Activated B cell treated with CpG ODN at 0.5 μM for 24 hours (primary cell): ENCODE measurements at regions of chr14 and their contacts with region 1.

Region 1: DNA sequence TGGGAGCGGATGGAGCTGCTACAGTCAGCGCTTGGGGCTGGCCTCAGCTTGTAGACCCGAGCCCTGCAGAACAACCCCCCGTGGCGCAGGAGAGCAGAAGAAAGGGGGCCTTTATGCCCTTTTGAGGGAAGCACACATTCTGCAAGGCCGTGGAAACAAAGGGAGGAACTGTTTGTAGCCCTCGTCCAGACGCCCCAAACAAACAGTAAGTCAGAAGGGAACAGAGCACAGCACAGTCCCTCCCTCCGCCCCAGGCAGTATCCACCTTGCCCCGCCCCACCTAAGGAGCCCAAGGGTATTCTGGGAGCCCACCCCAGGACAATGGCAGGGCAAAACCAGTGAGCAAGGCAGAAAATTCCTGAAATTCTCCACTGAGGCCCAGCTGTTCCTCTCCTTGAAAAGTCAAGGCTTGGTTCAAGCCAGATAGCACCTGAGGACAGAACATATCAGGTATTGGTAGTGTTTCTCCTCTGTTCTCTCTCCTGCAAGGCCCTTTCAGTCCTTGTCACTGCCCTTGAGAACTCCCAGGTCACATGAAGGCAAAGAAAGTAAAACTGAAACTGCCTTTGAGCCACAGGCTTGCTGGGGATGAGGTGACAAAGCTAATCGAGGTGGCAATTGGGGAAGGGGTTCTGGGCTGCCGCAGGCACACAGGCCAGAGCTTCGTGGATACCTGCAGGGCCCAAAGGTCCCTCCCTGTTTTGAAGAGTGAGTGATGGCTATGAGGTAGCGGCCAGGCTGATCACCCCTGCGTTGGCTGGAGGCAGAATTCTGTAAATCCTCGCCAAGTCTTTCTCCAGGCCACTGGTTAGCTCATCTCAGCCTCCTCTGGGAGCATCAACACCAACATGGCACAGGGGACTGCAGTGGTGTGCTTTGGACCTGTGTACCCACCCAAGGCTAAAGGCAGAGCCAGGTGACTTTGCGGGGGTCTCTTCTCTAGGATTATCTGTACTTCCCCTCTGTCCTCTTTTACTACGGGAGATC is 499 bp downstream of the DGLUCY start:
- DNase-seq: peak; percentile 54
- ATAC-seq: peak; percentile 84
- H3K4me3 Mint-ChIP-seq: peak overlapping the region; percentile 98
- H3K27ac Mint-ChIP-seq: peak overlapping the region; percentile 98
- H3K4me1 Mint-ChIP-seq: peaks cover 67% of the 10 kb centered on the region
- H3K27me3 Mint-ChIP-seq: no peaks in the 10 kb centered on the region
- CTCF ChIP-seq: no peak

Region 2: GRCh38 chr14:90894241-90894640 is 220.1 kb before region 1 on chr14:
- CTCF ChIA-PET with region 1: no interaction called
- POLR2A ChIA-PET with region 1: no interaction called
- intact Hi-C with region 1: no loop called
- DNase-seq: no peak
- ATAC-seq: no peak
- H3K4me3 Mint-ChIP-seq: no peak overlapping the region
- H3K27ac Mint-ChIP-seq: no peak overlapping the region
- H3K4me1 Mint-ChIP-seq: no peaks in the 10 kb centered on the region
- H3K27me3 Mint-ChIP-seq: no peaks in the 10 kb centered on the region
- CTCF ChIP-seq: no peak

Region 3: GRCh38 chr14:90999299-90999698 is 115.1 kb before region 1 on chr14:
- CTCF ChIA-PET with region 1: no interaction called
- POLR2A ChIA-PET with region 1: interaction called, 23 read pairs
- intact Hi-C with region 1: no loop called
- DNase-seq: no peak
- ATAC-seq: no peak
- H3K4me3 Mint-ChIP-seq: no peak overlapping the region
- H3K27ac Mint-ChIP-seq: peak overlapping the region; percentile 16
- H3K4me1 Mint-ChIP-seq: peaks cover 32% of the 10 kb centered on the region
- H3K27me3 Mint-ChIP-seq: no peaks in the 10 kb centered on the region
- CTCF ChIP-seq: no peak

Region 4: DNA sequence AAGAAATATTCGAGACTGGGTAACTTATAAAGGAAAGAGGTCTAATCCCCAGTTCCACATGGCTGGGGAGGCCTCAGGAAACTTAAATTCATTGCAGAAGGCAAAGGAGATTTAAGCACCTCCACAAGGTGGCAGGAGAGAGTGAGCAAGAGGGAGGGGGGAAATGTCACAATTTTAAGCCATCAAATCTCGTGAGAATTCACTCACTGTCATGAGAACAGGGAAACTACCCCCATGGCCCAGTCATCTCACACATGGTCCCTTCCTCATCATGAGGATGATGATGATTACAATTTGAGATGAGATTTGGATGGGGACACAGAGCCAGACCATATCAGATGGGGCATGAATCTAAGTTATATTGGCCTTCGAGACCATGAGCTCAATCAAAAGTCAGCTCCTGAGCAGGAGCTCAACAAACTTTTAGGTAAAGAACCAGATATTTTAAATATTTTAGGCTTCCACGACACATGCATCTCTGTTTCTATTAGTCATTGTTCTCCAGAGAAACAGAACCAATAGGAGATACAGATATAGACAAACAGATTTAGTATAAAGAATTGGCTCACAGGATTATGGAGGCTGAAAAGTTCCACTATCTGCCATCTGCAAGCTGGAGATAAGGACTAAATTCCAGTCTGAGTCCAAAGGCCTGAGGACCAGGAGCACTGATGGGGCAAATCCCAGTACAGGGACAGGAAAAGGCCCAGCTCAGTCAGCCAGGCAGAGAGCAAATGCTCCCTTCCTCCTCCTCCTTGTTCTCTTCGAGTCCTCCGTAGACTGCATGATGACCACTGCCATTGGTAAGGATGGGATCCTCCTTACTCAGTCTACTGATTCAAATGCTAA is 24.4 kb after region 1 on chr14:
- CTCF ChIA-PET with region 1: interaction called, 5 read pairs
- POLR2A ChIA-PET with region 1: interaction called, 20 read pairs
- intact Hi-C with region 1: loop called (anchors 1 kb)
- DNase-seq: no peak
- ATAC-seq: peak; percentile 29
- H3K4me3 Mint-ChIP-seq: no peak overlapping the region
- H3K27ac Mint-ChIP-seq: peak overlapping the region; percentile 69
- H3K4me1 Mint-ChIP-seq: peaks cover 32% of the 10 kb centered on the region
- H3K27me3 Mint-ChIP-seq: no peaks in the 10 kb centered on the region
- CTCF ChIP-seq: no peak